Right ventricle myocardium inferior (tissue), 1 donor: ENCODE measurements at regions of chr6 and their contacts with region 1.

Region 1: GRCh38 chr6:95545226-95545625 is 32.1 kb upstream of the MANEA start:
- DNase-seq: no peak
- ATAC-seq: peak; percentile 83

Region 2: GRCh38 chr6:95577304-95578105 is 32.3 kb after region 1 on chr6 and contains the start of gene MANEA:
- intact Hi-C with region 1: loop called (anchors 2 kb)
- DNase-seq: peak; percentile 89
- ATAC-seq: peak; percentile 98
- total RNA-seq, gene MANEA: 6.2 TPM